ENCODE measurements at regions of chr5 and their contacts with region 1.

Region 1: DNA sequence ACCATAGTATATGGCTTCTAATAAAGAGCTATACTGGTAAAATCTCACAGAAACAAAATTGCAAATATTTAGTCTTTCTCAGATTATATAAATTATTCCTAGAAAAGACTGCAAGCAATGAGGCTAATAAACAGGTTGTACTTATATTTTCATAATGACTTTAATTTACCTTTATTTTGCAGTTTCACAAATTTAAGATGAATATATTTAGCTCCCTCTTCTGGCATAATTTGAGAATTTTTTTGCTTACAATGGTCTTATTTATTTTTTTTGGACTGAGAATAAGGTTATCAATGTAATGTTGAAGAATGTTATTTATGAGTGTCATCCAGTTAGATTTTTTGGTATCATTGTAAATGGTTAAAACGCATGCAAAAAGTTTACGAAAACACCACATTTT is 56.7 kb downstream of the PIK3R1 start:
- DNase-seq: no peak
- H3K4me3 Mint-ChIP-seq: no peak overlapping the region
- H3K27ac Mint-ChIP-seq: no peak overlapping the region
- H3K4me1 Mint-ChIP-seq: peaks cover 89% of the 10 kb centered on the region
- H3K27me3 Mint-ChIP-seq: no peaks in the 10 kb centered on the region

Region 2: DNA sequence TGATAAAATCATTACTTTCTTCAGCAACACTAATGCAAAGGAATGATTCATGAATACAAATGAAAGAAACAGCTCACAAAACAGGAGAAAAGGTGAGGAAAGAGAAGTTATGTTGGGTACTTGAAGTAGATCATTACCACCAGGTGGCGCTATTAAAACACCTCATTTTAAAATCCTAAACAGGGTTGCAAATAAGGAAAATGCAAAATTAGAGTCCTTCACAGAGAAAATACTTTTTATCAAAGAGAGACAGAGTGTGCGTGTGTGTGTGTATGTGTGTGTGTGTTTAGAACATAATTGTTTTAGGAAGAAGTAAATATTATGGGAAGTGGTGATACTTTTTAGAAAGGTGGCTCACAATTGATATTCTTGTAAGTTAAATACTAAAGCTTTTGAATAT is 1026.2 kb before region 1 on chr5:
- CTCF ChIA-PET with region 1: interaction called, 30 read pairs
- POLR2A ChIA-PET with region 1: no interaction called
- intact Hi-C with region 1: loop called (anchors 5 kb)
- DNase-seq: no peak
- H3K4me3 Mint-ChIP-seq: no peak overlapping the region
- H3K27ac Mint-ChIP-seq: no peak overlapping the region
- H3K4me1 Mint-ChIP-seq: peaks cover 8% of the 10 kb centered on the region
- H3K27me3 Mint-ChIP-seq: no peaks in the 10 kb centered on the region

Region 3: DNA sequence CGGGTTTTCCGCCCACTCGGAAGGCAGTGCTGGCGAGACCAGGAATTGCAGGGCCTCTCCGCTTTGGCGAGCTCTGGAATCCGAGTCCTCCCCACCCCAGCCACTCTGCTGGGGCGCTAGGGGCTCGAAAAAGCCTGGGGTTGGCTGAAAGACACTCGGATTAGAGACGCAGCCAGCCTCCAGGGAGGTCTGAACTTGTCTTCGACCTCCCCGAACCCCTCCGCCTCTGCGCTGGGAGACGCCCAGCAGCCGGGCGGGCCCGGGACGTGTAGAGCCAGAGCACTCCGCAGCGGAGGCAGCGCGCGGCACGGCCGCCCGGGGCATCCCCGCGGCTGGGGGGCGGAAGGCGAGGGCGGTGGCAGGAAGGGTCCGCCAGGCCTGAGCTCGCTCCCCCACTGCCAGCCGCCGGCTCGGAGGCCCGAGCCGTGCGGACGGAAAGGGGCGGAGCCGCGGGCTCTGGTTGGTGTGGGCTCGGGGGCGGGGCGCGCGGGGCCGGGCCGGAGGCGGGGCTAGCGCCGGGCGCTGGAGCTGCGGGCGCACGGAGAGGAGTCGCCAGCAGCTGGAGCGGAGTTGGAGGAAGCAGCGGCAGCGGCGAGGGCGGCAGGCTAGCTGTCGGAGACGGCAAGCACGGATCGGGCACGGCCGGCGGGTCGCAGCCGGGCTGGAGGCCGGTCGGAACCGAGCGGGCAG is 56.9 kb before region 1 on chr5 and contains the start of gene PIK3R1:
- CTCF ChIA-PET with region 1: interaction called, 21 read pairs
- POLR2A ChIA-PET with region 1: interaction called, 5 read pairs
- intact Hi-C with region 1: loop called (anchors 2 kb)
- DNase-seq: peak; percentile 95
- H3K4me3 Mint-ChIP-seq: peak within 1 kb of the TSS; percentile 91
- H3K27ac Mint-ChIP-seq: peak within 1 kb of the TSS; percentile 97
- H3K4me1 Mint-ChIP-seq: peaks cover 39% of the 10 kb centered on the region
- H3K27me3 Mint-ChIP-seq: no peaks in the 10 kb centered on the region
- total RNA-seq, gene PIK3R1: 35.3 to 40.9 TPM

Region 4: GRCh38 chr5:68252673-68253623 is 19.3 kb before region 1 on chr5:
- CTCF ChIA-PET with region 1: interaction called, 24 read pairs
- POLR2A ChIA-PET with region 1: interaction called, 4 read pairs
- intact Hi-C with region 1: loop called (anchors 2 kb)
- DNase-seq: peak; percentile 59
- H3K4me3 Mint-ChIP-seq: no peak overlapping the region
- H3K27ac Mint-ChIP-seq: no peak overlapping the region
- H3K4me1 Mint-ChIP-seq: peaks cover 90% of the 10 kb centered on the region
- H3K27me3 Mint-ChIP-seq: no peaks in the 10 kb centered on the region